Right ventricle myocardium inferior (tissue), 1 donor: ENCODE measurements at regions of chr4 and their contacts with region 1.

Region 1: GRCh38 chr4:41644288-41644914 is 104.1 kb downstream of the PHOX2B start:
- DNase-seq: peak; percentile 83
- ATAC-seq: peak; percentile 88

Region 2: DNA sequence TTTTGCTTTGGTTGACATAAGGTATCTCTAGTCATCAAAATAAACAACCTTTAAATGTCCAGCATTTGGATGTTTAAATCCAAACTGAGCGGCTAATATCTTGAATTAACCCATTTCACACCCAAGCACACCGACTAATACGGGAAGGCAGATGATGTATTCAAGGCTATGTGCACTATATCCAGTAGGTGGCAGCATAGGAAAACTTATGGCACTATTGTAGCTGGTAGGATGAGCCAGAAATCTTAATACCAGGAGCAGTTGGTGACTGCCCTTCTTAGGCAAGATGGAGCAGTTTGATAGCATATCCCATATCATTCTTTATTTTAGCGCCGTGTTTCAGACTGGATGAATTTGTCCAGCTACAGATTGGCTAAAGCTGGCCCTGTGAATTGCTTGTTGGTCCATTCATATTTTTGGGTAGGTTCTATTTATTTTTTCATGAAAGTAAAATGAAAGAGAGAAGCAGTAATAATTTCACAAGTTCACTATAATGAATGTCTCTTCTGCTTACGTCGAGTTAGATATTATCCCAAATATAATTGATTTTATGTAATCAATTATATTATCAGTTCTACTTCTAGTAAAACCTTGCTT is 363.3 kb before region 1 on chr4:
- intact Hi-C with region 1: loop called (anchors 5 kb)
- DNase-seq: no peak
- ATAC-seq: peak; percentile 93